Activated B cell treated with CpG ODN at 0.5 μM for 24 hours (primary cell): ENCODE measurements at regions of chr10 and their contacts with region 1.

Region 1: GRCh38 chr10:13891128-13892000 is 304.6 kb downstream of the PRPF18 start:
- DNase-seq: no peak
- ATAC-seq: peak; percentile 45
- H3K4me3 Mint-ChIP-seq: peak overlapping the region; percentile 75
- H3K27ac Mint-ChIP-seq: no peak overlapping the region
- H3K4me1 Mint-ChIP-seq: peaks cover 15% of the 10 kb centered on the region
- H3K27me3 Mint-ChIP-seq: peaks cover 66% of the 10 kb centered on the region
- CTCF ChIP-seq: no peak

Region 2: GRCh38 chr10:13865758-13866491 is 25.4 kb before region 1 on chr10:
- CTCF ChIA-PET with region 1: no interaction called
- POLR2A ChIA-PET with region 1: no interaction called
- intact Hi-C with region 1: no loop called
- DNase-seq: no peak
- ATAC-seq: no peak
- H3K4me3 Mint-ChIP-seq: no peak overlapping the region
- H3K27ac Mint-ChIP-seq: no peak overlapping the region
- H3K4me1 Mint-ChIP-seq: peaks cover 6% of the 10 kb centered on the region
- H3K27me3 Mint-ChIP-seq: peaks cover 2% of the 10 kb centered on the region
- CTCF ChIP-seq: no peak

Region 3: DNA sequence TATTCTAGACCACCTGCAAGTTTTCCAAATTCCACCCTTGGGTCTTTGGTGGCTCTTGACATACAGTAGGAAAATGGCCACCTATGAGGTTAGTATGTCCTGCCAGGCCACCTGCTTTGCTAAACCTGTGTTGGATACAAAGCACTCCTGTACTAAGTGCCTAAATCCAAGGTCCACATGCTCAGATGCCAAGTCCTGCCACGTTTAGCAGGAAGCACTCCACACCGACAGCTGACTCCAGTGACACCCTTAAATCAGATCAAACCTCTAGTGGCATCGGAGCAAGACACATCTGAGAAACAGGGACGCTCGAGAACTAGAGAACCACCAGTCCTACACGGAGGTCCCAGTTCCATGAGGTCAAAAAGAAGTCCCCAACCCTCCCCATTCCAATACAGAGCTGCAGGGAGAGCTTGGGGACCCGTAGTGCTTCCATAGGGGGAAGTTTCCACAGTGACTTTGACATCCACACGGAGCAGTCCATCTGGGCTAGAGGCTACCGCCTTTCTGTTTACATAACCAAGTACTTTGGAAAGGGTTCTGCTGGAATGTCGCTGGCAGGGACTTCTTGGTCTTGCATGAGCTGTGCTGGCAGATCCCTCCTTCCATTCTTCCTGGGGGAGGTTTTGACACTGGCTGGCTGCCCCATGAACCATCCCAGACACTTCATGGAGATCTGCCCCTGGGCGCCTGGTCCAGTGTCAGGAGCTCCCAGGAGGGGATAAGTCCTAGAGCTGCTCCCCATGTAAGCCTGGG is 14.0 kb before region 1 on chr10:
- CTCF ChIA-PET with region 1: no interaction called
- POLR2A ChIA-PET with region 1: no interaction called
- intact Hi-C with region 1: loop called (anchors 2 kb)
- DNase-seq: no peak
- ATAC-seq: no peak
- H3K4me3 Mint-ChIP-seq: no peak overlapping the region
- H3K27ac Mint-ChIP-seq: no peak overlapping the region
- H3K4me1 Mint-ChIP-seq: peaks cover 31% of the 10 kb centered on the region
- H3K27me3 Mint-ChIP-seq: no peaks in the 10 kb centered on the region
- CTCF ChIP-seq: no peak

Region 4: DNA sequence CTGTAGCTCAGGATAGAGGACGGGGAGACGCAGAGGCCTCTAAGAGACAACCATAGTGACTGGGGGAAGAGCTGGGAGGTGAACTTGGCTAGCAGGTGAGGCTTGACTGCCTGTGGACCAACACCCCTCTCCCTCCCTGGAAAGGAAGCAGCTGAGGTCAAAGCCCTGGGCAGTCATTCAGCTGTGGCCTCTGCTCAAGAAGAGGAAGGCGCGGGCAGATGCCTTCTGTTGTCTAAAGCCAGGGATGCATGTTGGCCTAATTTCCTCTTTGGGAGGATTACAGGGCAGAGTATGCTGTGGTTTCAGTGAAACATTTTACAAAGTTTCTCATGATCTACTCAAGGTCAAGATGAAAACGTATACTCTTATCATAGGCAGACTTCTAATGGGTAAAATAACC is 22.5 kb after region 1 on chr10:
- CTCF ChIA-PET with region 1: no interaction called
- POLR2A ChIA-PET with region 1: no interaction called
- intact Hi-C with region 1: no loop called
- DNase-seq: no peak
- ATAC-seq: no peak
- H3K4me3 Mint-ChIP-seq: no peak overlapping the region
- H3K27ac Mint-ChIP-seq: no peak overlapping the region
- H3K4me1 Mint-ChIP-seq: peaks cover 11% of the 10 kb centered on the region
- H3K27me3 Mint-ChIP-seq: peaks cover 2% of the 10 kb centered on the region
- CTCF ChIP-seq: no peak

Region 5: DNA sequence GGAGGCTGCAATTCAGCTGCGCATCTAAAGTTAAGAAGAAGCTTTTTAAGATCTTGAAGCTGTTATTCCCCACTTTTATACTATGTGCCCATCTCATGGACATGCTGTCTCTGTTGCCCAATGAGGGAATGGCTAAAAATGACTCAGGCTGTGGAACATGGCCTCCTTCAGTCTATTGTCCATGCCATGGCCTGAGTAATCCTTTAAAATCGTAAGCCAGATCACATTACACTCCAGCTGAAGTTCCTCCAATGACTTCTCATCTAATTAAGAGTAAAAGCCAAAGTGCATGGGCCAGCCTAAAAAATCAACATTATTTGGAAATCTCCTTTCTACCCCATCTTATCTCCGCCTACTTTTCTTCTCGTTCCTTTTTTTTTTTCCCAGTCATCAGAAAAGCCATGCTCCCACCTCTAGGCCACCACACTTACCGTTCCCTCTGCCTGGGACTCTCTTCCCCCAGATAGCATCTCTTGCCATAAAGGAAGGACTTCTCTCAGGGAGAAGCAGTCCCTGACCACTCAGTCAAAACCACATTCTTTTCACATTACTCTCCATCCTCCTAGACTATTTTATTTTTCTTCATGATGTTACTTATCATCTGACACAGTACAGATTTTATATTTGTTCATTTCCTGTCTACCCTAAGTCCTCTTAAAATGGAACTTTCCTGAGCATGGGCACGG is 32.8 kb after region 1 on chr10:
- CTCF ChIA-PET with region 1: no interaction called
- POLR2A ChIA-PET with region 1: no interaction called
- intact Hi-C with region 1: no loop called
- DNase-seq: no peak
- ATAC-seq: no peak
- H3K4me3 Mint-ChIP-seq: no peak overlapping the region
- H3K27ac Mint-ChIP-seq: no peak overlapping the region
- H3K4me1 Mint-ChIP-seq: peaks cover 25% of the 10 kb centered on the region
- H3K27me3 Mint-ChIP-seq: peaks cover 6% of the 10 kb centered on the region
- CTCF ChIP-seq: no peak

Region 6: DNA sequence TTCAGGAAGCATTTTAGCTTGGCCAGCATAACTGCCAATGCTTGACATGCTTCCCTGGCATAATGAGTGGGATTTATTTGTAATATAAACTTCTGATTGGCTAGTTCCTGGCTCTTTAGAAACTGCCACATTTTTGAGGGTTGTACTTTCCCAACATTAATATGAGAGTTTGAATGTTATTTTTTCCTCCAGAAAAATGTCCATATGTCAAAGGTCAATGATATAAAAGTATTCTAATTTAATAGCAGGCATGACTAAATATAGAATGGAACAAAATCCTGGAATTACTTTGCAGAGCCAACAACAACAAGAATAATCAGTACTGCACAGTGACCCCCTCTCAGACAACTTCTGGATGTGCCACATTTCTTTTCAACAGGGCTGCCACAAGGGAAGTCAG is 48.0 kb after region 1 on chr10:
- CTCF ChIA-PET with region 1: no interaction called
- POLR2A ChIA-PET with region 1: no interaction called
- intact Hi-C with region 1: no loop called
- DNase-seq: no peak
- ATAC-seq: no peak
- H3K4me3 Mint-ChIP-seq: no peak overlapping the region
- H3K27ac Mint-ChIP-seq: no peak overlapping the region
- H3K4me1 Mint-ChIP-seq: no peaks in the 10 kb centered on the region
- H3K27me3 Mint-ChIP-seq: peaks cover 14% of the 10 kb centered on the region
- CTCF ChIP-seq: no peak